Heart right ventricle (tissue), 16 donors: ENCODE measurements at regions of chr1 and their contacts with region 1.

Region 1: GRCh38 chr1:227919906-227920305 is 27.8 kb downstream of the WNT9A start:
- DNase-seq: no peak
- ATAC-seq: no peak
- H3K4me3 ChIP-seq: no peak overlapping the region
- H3K27ac ChIP-seq: no peak overlapping the region
- H3K4me1 ChIP-seq: peaks cover 0 to 3% (median 0%) of the 10 kb centered on the region in 9 donors
- H3K27me3 ChIP-seq: no peaks in the 10 kb centered on the region
- CTCF ChIP-seq: no peak

Region 2: DNA sequence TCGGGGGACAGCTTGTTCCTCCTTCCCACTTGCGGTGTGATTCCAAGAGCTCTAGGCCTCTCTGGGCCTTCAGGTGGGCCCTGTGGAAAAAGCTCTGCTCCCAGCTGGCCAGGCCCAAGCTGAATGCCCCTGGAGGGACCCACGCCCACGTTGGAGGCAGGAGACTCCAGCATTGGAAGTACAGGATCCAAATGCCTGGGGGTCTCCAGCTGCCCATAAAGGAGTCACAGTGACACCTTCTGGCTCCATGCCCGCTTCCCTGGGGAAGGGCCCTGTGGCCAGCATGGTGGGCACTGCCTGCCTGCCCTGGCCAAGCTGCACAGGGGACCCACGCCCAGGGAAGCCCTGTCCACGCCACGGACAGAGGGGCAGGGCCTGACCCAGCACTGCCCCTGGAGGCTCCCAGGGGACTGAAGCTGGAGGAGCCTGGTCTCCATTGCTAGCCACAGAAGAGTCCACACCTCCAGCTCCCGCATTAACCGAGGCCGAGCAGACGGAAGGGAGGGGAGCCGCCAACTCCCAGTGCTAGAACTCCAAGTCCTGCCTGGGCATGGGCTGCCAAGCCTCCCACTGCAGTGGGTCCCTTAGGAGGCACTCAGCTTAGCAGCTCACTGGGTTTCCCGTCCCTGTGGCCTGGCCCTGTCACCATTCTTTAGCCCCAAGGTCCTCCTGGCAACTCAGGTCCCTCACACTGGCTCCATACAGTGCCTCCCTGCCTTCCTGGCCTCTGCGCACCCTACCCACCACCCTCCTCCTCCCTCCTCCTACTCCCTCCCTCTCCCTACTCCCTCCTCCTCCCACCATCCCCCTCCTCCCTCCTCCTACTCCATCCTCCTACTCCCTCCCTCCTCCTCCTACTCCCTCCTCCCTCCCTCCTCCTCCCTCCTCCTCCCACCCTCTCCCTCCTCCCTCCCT is 14.1 kb before region 1 on chr1:
- intact Hi-C with region 1: loop called in 1 of 10 experiments (anchors 2 kb)
- DNase-seq: peak in 1 of 2 donors; percentile 10
- ATAC-seq: no peak
- H3K4me3 ChIP-seq: no peak overlapping the region
- H3K27ac ChIP-seq: no peak overlapping the region
- H3K4me1 ChIP-seq: no peaks in the 10 kb centered on the region
- H3K27me3 ChIP-seq: no peaks in the 10 kb centered on the region
- CTCF ChIP-seq: no peak

Region 3: DNA sequence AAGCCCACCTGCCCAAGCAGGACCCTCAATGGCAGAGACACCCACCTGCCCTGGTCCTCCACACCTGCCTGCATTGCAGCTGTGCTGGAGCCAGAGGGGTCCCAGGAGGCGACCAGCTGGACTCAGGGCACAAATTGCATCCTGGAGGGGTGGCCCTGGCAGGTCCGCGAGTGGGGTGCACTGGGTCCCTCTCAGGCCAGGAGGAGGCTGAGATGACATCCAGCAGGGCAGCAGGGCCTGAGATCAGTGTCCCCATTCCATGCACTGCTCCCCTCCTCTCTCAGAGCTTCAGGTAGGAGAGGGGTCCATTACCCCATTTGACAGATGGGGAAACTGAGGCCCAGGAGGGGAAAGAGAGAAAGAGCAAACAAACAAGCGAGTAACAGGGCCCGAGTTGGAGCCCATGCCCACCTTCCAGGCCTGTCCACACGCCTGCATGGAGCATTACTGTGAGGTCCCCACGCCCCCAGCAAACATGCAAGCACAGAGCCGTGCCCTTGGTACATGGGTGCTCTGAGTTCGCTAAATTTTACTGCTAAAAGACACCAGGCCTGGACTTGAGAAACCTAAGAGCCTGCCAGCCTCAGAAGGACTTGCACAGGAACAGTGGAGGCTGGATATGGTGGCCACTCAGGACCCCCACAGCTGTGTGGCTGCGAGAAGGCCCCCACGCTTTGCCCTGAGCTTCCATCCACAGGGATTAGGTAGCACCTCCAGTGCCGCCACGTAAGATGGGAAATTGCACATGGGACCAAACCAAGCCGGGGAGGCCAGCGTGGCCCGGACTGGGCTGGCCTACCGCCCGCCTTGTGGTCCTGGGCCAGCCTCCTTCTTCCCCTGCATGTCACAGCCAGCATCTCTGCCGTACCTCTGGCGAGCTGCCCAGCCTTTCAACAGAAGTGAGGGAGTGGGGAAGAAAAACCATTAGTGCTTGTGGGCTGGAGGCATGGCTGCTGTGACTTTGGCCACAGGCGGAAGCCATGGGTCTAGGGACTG is 94.3 kb after region 1 on chr1:
- intact Hi-C with region 1: no loop called
- DNase-seq: peak in 1 of 2 donors; percentile 26
- ATAC-seq: no peak
- H3K4me3 ChIP-seq: no peak overlapping the region
- H3K27ac ChIP-seq: no peak overlapping the region
- H3K4me1 ChIP-seq: no peaks in the 10 kb centered on the region
- H3K27me3 ChIP-seq: peaks cover 0 to 46% (median 29%) of the 10 kb centered on the region in 7 donors
- CTCF ChIP-seq: no peak

Region 4: DNA sequence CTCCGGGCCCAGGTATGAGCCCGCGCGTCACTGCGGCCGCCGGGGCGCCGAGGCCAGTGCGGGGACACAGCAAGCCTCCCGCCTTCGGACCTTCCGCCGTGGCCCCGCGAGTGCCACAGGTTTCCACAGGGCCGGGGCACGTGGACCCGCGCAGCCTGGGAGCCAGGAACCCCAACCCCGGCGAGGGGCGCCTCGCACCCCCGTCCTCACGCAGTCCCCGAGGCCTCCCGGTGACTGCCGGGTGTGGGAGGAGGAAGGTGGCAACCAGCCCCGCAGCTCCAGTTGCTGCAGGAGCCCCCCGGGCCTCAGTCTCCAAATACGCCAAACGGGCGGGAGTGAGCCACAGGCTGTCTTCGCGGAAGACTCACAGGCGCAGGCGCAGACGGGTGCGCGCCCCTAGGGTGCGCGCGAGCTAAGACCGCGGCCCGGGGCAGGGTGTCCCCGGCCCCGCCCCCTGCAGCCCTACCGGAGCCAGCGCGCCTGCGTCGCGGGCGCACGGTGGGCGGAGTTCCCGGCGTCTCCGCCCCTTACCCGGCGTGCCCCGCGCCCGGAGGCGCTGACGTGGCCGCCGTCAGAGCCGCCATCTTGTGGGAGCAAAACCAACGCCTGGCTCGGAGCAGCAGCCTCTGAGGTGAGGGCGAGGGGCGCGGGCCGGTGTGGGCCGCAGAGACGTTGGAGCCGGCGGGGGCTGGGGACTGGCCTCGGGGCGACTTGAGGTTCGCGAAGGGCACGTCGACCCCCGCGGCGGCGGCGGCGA is 162.4 kb after region 1 on chr1 and contains the start of gene ARF1:
- intact Hi-C with region 1: no loop called
- DNase-seq: peak; percentile 90 to 94
- ATAC-seq: peak; percentile 92 to 97 (median 95)
- H3K4me3 ChIP-seq: peak within 1 kb of the TSS; percentile 71 to 100 (median 92)
- H3K27ac ChIP-seq: peak within 1 kb of the TSS; percentile 98 to 100 (median 100)
- H3K4me1 ChIP-seq: peaks cover 22 to 53% (median 49%) of the 10 kb centered on the region in 9 donors
- H3K27me3 ChIP-seq: no peaks in the 10 kb centered on the region
- CTCF ChIP-seq: peak in 4 of 9 donors; percentile 28 to 50 (median 39)
- total RNA-seq, gene ARF1: 262 to 372 (median 338) TPM